MCF 10A (cell line): ENCODE measurements at regions of chr5 and their contacts with region 1.

Region 1: GRCh38 chr5:172188033-172188892 is at the start of gene STK10:
- DNase-seq: peak; percentile 95
- H3K4me3 Mint-ChIP-seq: peak within 1 kb of the TSS; percentile 87
- H3K27ac Mint-ChIP-seq: peak within 1 kb of the TSS; percentile 43
- H3K4me1 Mint-ChIP-seq: peaks cover 24% of the 10 kb centered on the region
- H3K27me3 Mint-ChIP-seq: no peaks in the 10 kb centered on the region
- CTCF ChIP-seq: peak; percentile 98
- total RNA-seq, gene STK10: 46.5 and 49.9 TPM in 2 replicates

Region 2: DNA sequence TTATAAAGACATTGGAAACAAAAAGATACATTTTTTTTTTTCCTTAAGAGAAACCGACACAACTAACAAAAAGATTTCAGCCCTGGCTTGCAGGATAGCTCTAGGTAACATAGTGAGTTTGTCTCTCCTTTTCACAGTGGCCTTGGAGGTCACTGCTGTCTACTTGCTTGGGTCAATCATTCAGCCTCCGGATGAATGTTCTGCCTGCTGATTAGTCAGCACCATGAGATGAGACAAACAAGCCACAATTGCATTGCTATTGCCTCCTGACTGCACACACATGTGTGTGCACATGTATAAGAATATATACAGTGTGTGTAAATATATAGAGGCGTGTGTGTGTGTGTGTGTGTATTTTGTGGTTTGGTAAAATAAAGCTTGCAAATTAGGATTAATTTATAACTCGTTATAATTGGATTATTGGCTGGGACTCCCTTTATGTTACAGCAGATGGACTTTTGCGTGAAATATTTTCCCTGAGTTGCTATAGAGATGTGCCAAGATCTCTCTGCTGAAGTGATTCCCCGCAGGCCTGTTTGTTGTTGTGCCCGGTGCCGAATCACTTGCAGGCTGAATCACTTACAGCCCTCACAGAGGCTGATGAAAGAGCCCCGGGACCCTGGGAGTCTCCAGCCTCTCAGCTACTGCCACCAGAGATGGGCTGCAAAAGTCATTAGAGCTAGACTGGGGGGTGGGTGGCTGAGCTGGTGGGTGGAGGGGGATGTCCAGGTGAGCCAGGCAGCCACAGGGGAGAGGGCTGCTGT is 607.6 kb before region 1 on chr5:
- CTCF ChIA-PET with region 1: no interaction called
- POLR2A ChIA-PET with region 1: no interaction called
- intact Hi-C with region 1: no loop called
- DNase-seq: no peak
- H3K4me3 Mint-ChIP-seq: no peak overlapping the region
- H3K27ac Mint-ChIP-seq: no peak overlapping the region
- H3K4me1 Mint-ChIP-seq: no peaks in the 10 kb centered on the region
- H3K27me3 Mint-ChIP-seq: peaks cover 32% of the 10 kb centered on the region
- CTCF ChIP-seq: no peak

Region 3: GRCh38 chr5:171907725-171908343 is 280.4 kb before region 1 on chr5:
- CTCF ChIA-PET with region 1: interaction called, 44 read pairs
- POLR2A ChIA-PET with region 1: interaction called, 17 read pairs
- intact Hi-C with region 1: loop called (anchors 1 kb)
- DNase-seq: peak; percentile 79
- H3K4me3 Mint-ChIP-seq: no peak overlapping the region
- H3K27ac Mint-ChIP-seq: no peak overlapping the region
- H3K4me1 Mint-ChIP-seq: peaks cover 10% of the 10 kb centered on the region
- H3K27me3 Mint-ChIP-seq: no peaks in the 10 kb centered on the region
- CTCF ChIP-seq: peak; percentile 92

Region 4: GRCh38 chr5:172052450-172053236 is 135.6 kb before region 1 on chr5:
- CTCF ChIA-PET with region 1: interaction called, 10 read pairs
- POLR2A ChIA-PET with region 1: no interaction called
- intact Hi-C with region 1: no loop called
- DNase-seq: no peak
- H3K4me3 Mint-ChIP-seq: no peak overlapping the region
- H3K27ac Mint-ChIP-seq: no peak overlapping the region
- H3K4me1 Mint-ChIP-seq: no peaks in the 10 kb centered on the region
- H3K27me3 Mint-ChIP-seq: no peaks in the 10 kb centered on the region
- CTCF ChIP-seq: no peak

Region 5: GRCh38 chr5:172106511-172107356 is 81.5 kb before region 1 on chr5:
- CTCF ChIA-PET with region 1: interaction called, 259 read pairs
- POLR2A ChIA-PET with region 1: interaction called, 17 read pairs
- intact Hi-C with region 1: loop called (anchors 1 kb)
- DNase-seq: peak; percentile 47
- H3K4me3 Mint-ChIP-seq: peak overlapping the region; percentile 46
- H3K27ac Mint-ChIP-seq: no peak overlapping the region
- H3K4me1 Mint-ChIP-seq: peaks cover 65% of the 10 kb centered on the region
- H3K27me3 Mint-ChIP-seq: no peaks in the 10 kb centered on the region
- CTCF ChIP-seq: peak; percentile 99

Region 6: DNA sequence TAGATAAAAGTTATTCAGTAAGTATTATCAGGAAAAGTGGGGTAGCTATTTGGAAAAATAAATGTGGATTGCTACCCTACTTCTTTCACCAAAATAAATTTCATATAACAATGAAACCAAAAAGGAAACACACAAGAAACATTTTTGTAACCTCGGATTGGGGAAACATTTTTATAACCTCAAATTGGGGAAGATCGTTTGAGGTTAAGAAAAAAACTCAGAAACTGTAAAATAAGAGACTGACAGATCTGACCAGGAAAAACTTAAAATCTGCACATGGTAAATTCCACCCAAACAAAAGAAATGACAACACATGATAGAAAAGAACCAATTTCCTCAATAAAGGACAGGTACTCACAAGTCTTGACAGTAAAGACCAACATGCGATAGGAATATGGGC is 19.2 kb after region 1 on chr5:
- CTCF ChIA-PET with region 1: interaction called, 17 read pairs
- POLR2A ChIA-PET with region 1: no interaction called
- intact Hi-C with region 1: no loop called
- DNase-seq: no peak
- H3K4me3 Mint-ChIP-seq: no peak overlapping the region
- H3K27ac Mint-ChIP-seq: no peak overlapping the region
- H3K4me1 Mint-ChIP-seq: no peaks in the 10 kb centered on the region
- H3K27me3 Mint-ChIP-seq: no peaks in the 10 kb centered on the region
- CTCF ChIP-seq: no peak

Region 7: GRCh38 chr5:172293054-172293744 is 104.9 kb after region 1 on chr5:
- CTCF ChIA-PET with region 1: interaction called, 25 read pairs
- POLR2A ChIA-PET with region 1: interaction called, 5 read pairs
- intact Hi-C with region 1: no loop called
- DNase-seq: peak; percentile 87
- H3K4me3 Mint-ChIP-seq: no peak overlapping the region
- H3K27ac Mint-ChIP-seq: no peak overlapping the region
- H3K4me1 Mint-ChIP-seq: peaks cover 9% of the 10 kb centered on the region
- H3K27me3 Mint-ChIP-seq: peaks cover 12% of the 10 kb centered on the region
- CTCF ChIP-seq: peak; percentile 97